ENCODE measurements at regions of chr10 and their contacts with region 1.

Region 1: GRCh38 chr10:11604865-11605650 is 6.4 kb downstream of the USP6NL start:
- DNase-seq: no peak
- CTCF ChIP-seq: no peak

Region 2: GRCh38 chr10:11533328-11533781 is 71.7 kb before region 1 on chr10:
- in situ Hi-C with region 1: loop called (anchors 5 kb)
- DNase-seq: no peak
- CTCF ChIP-seq: peak; percentile 3

Region 3: DNA sequence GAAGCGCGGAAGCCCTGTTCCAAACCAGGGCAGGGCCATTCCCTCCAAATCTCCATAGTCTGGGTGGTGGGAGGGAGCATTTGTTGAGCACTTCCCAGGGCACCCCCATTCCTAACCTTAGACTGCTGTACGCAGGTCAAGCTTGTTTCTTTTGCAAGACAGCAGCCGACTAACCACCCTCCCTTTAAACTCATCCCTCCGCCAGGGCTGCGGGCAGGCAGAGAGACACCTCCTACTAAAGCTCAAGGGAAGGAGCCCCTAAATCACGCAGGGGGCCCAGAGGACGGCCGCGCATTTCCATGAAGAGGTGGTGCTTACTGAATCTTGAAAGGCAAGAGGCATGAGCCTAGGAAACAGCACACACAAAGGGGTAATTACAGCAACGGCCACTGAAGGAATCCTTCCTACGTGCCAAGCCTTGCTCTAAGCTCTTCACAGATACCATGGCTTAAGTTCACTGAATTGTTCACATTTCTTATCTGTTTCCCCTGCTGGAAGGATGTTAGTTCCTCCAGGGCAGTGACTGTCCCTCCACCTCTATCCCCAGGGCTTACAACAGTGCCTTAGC is 308.1 kb after region 1 on chr10:
- in situ Hi-C with region 1: no loop called
- DNase-seq: no peak
- CTCF ChIP-seq: no peak

Region 4: DNA sequence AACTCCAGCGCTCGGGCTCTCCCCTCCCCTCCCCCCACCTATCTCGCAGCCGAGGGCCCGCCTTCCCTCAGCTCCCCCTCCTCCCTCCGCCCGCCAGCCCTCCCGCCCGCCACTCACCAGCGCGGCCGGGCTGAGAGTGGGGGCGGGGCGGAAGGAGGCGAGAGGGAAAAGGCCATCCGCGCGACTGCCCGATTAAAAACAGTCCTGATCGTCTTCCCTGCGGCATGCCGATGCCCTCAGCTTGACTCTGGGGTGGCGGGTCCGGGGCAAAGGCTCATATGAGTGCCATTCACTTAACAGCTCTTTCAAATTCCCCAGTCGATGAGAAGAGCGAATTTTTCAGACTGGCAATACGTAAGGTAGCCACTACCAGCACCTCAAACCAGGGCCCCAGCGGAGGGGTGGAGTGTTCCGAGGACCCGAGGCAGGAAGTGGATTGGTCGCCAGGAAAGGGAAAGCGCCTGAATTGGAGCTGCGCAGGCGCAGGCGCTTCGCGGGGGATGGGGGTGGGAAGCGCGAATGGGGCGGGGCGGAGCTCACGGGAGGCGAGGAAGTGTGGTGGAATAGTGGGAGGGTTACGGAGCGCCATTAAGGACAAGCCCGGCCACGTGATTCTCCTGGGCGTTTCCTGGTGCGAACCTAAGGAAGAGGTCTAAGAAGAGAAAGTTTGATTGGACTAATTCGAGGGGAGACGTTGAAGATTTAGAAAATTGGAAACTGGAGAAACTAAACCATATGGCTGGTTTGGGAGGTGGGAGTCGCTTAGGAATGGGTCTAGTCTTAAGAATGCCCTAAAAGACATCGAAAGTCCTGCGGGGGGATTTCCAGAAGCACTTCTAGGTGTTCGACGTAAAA is 438.0 kb after region 1 on chr10 and contains the start of gene UPF2:
- in situ Hi-C with region 1: no loop called
- DNase-seq: peak; percentile 97
- CTCF ChIP-seq: no peak

Measured in GM13977 (cell line).